HEK293 (cell line): ENCODE measurements at regions of chr20 and their contacts with region 1.

Region 1: GRCh38 chr20:667391-667964 is 8.1 kb downstream of the SCRT2 start:
- H3K4me3 ChIP-seq: no peak overlapping the region
- H3K27ac ChIP-seq: no peak overlapping the region
- H3K4me1 ChIP-seq: no peaks in the 10 kb centered on the region
- CTCF ChIP-seq: peak; percentile 54; the same call in 1 of the 2 replicates

Region 2: GRCh38 chr20:634556-634955 is 32.9 kb before region 1 on chr20:
- CTCF ChIA-PET with region 1: interaction called, 12 read pairs
- POLR2A ChIA-PET with region 1: no interaction called
- H3K4me3 ChIP-seq: no peak overlapping the region
- H3K27ac ChIP-seq: no peak overlapping the region
- H3K4me1 ChIP-seq: no peaks in the 10 kb centered on the region
- CTCF ChIP-seq: no peak

Region 3: DNA sequence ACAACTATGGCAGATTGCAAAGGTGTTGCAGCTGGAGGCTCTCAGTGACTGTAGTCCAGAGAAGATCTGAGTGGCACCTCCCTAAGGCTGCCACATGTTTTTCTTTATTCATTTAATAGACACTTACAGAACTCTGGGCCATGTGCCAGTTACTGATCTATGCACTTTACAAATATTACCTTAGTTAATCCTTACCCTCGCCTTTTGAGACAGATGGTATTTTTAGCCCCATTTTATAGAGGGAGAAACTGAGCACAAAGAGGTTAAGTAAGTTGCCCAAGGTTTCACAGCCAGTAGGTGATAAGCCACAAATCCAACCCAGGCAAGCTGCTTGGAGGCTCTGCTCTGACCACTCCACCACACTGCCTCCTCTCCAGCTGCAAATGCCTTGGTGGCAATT is 14.6 kb after region 1 on chr20:
- CTCF ChIA-PET with region 1: interaction called, 14 read pairs
- POLR2A ChIA-PET with region 1: no interaction called
- H3K4me3 ChIP-seq: no peak overlapping the region
- H3K27ac ChIP-seq: no peak overlapping the region
- H3K4me1 ChIP-seq: no peaks in the 10 kb centered on the region
- CTCF ChIP-seq: no peak

Region 4: GRCh38 chr20:695165-695866 is 27.8 kb after region 1 on chr20:
- CTCF ChIA-PET with region 1: interaction called, 14 read pairs
- POLR2A ChIA-PET with region 1: interaction called, 3 read pairs
- H3K4me3 ChIP-seq: no peak overlapping the region
- H3K27ac ChIP-seq: no peak overlapping the region
- H3K4me1 ChIP-seq: no peaks in the 10 kb centered on the region
- CTCF ChIP-seq: no peak

Region 5: GRCh38 chr20:728248-728944 is 60.9 kb after region 1 on chr20:
- CTCF ChIA-PET with region 1: interaction called, 17 read pairs
- POLR2A ChIA-PET with region 1: no interaction called
- H3K4me3 ChIP-seq: peak overlapping the region; percentile 30
- H3K27ac ChIP-seq: no peak overlapping the region
- H3K4me1 ChIP-seq: no peaks in the 10 kb centered on the region
- CTCF ChIP-seq: peak; percentile 96